ENCODE measurements at regions of chr11 and their contacts with region 1.

Region 1: DNA sequence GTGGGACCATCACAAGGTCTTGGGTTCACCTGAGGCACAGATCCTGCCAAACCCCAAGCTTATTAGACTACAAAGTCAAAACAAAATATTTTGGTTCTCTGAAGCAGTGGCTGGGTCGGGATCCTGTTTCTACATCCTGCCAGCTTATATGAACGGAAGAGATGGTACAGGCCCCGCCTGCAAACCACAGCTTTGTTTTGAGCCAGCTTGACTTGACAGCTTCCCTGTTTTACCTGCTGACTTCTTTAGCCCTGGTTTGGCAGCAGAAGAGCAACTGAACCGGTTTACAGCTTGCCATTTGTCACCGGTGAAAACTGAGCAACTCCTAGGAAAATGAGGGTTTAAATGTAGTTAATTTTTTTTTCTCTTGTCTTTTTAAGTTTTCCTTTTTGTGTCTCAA is 11.4 kb downstream of the PACS1 start:
- DNase-seq: peak; percentile 88

Region 2: GRCh38 chr11:66056501-66056900 is 25.0 kb before region 1 on chr11:
- intact Hi-C with region 1: no loop called
- DNase-seq: no peak

Region 3: GRCh38 chr11:66119348-66120133 is 38.0 kb after region 1 on chr11:
- intact Hi-C with region 1: loop called (anchors 5 kb)
- DNase-seq: no peak

Region 4: GRCh38 chr11:66126808-66127555 is 45.5 kb after region 1 on chr11:
- intact Hi-C with region 1: loop called (anchors 5 kb)
- DNase-seq: peak; percentile 82